HEK293 (cell line): ENCODE measurements at regions of chr11 and their contacts with region 1.

Region 1: DNA sequence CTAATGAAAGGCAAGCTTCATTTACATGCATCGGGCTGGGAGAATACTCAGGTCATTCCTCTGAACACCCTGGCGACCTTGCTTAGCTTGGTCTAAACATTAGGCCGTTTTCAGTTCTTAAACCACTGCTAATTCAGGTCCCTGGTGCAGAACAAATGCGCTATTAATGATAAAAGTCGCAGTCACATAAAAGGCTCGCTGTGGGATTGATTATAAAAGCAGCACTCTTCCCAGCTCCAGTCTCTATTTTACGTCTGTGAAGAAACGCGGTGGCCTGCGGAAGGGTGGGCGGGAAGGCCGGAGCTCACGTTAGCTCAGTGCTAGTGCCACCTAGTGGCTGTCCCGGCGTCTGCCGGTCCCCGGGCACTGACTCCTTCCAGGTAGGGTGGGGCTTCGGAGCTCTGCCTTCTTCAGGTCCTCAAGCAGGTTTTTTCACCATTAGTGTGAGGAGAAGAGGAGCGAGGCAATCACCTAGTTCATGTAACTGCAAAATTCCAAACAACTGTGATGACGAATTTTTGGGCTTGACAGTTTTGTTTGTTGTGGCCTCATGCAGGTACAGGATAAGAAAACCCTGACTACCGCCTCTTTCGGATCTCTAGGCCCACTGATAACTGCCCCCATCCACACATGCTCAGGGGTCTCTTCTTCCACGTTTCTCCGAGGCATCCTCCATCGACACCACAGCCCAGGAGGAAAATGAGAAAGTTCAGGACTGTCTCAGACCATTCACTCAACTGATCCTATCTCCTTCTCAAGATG is 66.5 kb upstream of the CLMP start:
- H3K4me3 ChIP-seq: no peak overlapping the region
- H3K27ac ChIP-seq: no peak overlapping the region
- H3K4me1 ChIP-seq: peaks cover 6% of the 10 kb centered on the region
- CTCF ChIP-seq: peak; percentile 53; the same call in 1 of the 2 replicates

Region 2: GRCh38 chr11:123103326-123103980 is 158.1 kb before region 1 on chr11:
- CTCF ChIA-PET with region 1: interaction called, 37 read pairs
- POLR2A ChIA-PET with region 1: no interaction called
- H3K4me3 ChIP-seq: no peak overlapping the region
- H3K27ac ChIP-seq: no peak overlapping the region
- H3K4me1 ChIP-seq: 0 out of 2 replicates have a peak, but pooled peaks cover 3% of the 10 kb centered on the region
- CTCF ChIP-seq: no peak; the same call in 1 of the 2 replicates

Region 3: GRCh38 chr11:123166071-123166559 is 95.4 kb before region 1 on chr11:
- CTCF ChIA-PET with region 1: interaction called, 10 read pairs
- POLR2A ChIA-PET with region 1: no interaction called
- H3K4me3 ChIP-seq: no peak overlapping the region
- H3K27ac ChIP-seq: no peak overlapping the region
- H3K4me1 ChIP-seq: no peaks in the 10 kb centered on the region
- CTCF ChIP-seq: 0 out of 2 replicates have a peak, but pooled peaks have one; percentile 20

Region 4: GRCh38 chr11:123246749-123247495 is 14.6 kb before region 1 on chr11:
- CTCF ChIA-PET with region 1: interaction called, 76 read pairs
- POLR2A ChIA-PET with region 1: no interaction called
- H3K4me3 ChIP-seq: no peak overlapping the region
- H3K27ac ChIP-seq: no peak overlapping the region
- H3K4me1 ChIP-seq: no peaks in the 10 kb centered on the region
- CTCF ChIP-seq: peak; percentile 52

Region 5: DNA sequence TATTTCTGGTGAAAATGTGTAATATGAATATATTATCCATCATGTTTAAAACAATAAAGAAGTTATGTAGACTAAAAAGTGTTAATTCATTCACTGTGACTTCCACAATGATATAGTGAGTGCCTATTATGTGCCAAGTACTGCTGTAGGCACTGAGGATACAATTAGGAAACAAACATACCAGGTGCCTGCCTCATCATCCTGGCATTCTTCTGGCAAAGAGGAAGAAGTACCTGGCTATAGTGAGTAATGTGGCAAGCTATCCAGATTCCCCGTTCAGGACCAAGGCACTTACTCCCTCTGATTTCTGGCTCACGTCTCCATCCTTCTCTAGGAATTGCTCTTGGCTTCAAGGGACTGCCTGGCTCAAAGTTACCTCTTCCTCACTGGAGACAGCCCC is 11.0 kb after region 1 on chr11:
- CTCF ChIA-PET with region 1: interaction called, 23 read pairs
- POLR2A ChIA-PET with region 1: interaction called, 4 read pairs
- H3K4me3 ChIP-seq: no peak overlapping the region
- H3K27ac ChIP-seq: no peak overlapping the region
- H3K4me1 ChIP-seq: no peaks in the 10 kb centered on the region
- CTCF ChIP-seq: no peak